ENCODE measurements at regions of chr22 and their contacts with region 1.

Region 1: GRCh38 chr22:30606455-30607299 is at the start of gene TCN2:
- DNase-seq: peak in 1 of 2 experiments; percentile 53
- H3K4me3 ChIP-seq: peak within 1 kb of the TSS; percentile 46; the same call in 1 of the 2 replicates
- H3K27ac ChIP-seq: no peak within 1 kb of the TSS
- H3K4me1 ChIP-seq: peaks cover 34% of the 10 kb centered on the region
- H3K27me3 ChIP-seq: no peaks in the 10 kb centered on the region
- CTCF ChIP-seq: no peak
- total RNA-seq, gene TCN2: 11.5 and 12.9 TPM in 2 replicates

Region 2: GRCh38 chr22:30262917-30263741 is 343.5 kb before region 1 on chr22:
- CTCF ChIA-PET with region 1: no interaction called
- POLR2A ChIA-PET with region 1: no interaction called
- intact Hi-C with region 1: loop called (anchors 10 kb)
- DNase-seq: peak in 1 of 2 experiments; percentile 64
- H3K4me3 ChIP-seq: peak overlapping the region; percentile 49; the same call in 1 of the 2 replicates
- H3K27ac ChIP-seq: no peak overlapping the region
- H3K4me1 ChIP-seq: peaks cover 51% of the 10 kb centered on the region
- H3K27me3 ChIP-seq: no peaks in the 10 kb centered on the region
- CTCF ChIP-seq: peak; percentile 100

Region 3: GRCh38 chr22:30386960-30387827 is 219.5 kb before region 1 on chr22 and contains the start of gene RNF215:
- CTCF ChIA-PET with region 1: interaction called, 3 read pairs
- POLR2A ChIA-PET with region 1: no interaction called
- intact Hi-C with region 1: loop called (anchors 1 kb)
- DNase-seq: peak; percentile 52 to 89
- H3K4me3 ChIP-seq: peak within 1 kb of the TSS; percentile 65
- H3K27ac ChIP-seq: no peak within 1 kb of the TSS
- H3K4me1 ChIP-seq: peaks cover 15% of the 10 kb centered on the region
- H3K27me3 ChIP-seq: no peaks in the 10 kb centered on the region
- CTCF ChIP-seq: peak; percentile 94
- total RNA-seq, gene RNF215: 24.0 and 33.8 TPM in 2 replicates

Region 4: GRCh38 chr22:30423982-30424963 is 182.4 kb before region 1 on chr22:
- CTCF ChIA-PET with region 1: no interaction called
- POLR2A ChIA-PET with region 1: interaction called, 6 read pairs
- intact Hi-C with region 1: loop called (anchors 10 kb)
- DNase-seq: peak; percentile 98 to 99
- H3K4me3 ChIP-seq: peak overlapping the region; percentile 70
- H3K27ac ChIP-seq: peak overlapping the region; percentile 93
- H3K4me1 ChIP-seq: peaks cover 43% of the 10 kb centered on the region
- H3K27me3 ChIP-seq: no peaks in the 10 kb centered on the region
- CTCF ChIP-seq: peak; percentile 19; the same call in 1 of the 2 replicates

Region 5: GRCh38 chr22:30562366-30562765 is 44.3 kb before region 1 on chr22:
- CTCF ChIA-PET with region 1: interaction called, 10 read pairs
- POLR2A ChIA-PET with region 1: no interaction called
- intact Hi-C with region 1: no loop called
- DNase-seq: peak; percentile 89 to 97
- H3K4me3 ChIP-seq: no peak overlapping the region
- H3K27ac ChIP-seq: peak overlapping the region; percentile 7; the same call in 1 of the 2 replicates
- H3K4me1 ChIP-seq: peaks cover 20% of the 10 kb centered on the region
- H3K27me3 ChIP-seq: no peaks in the 10 kb centered on the region
- CTCF ChIP-seq: no peak

Region 6: DNA sequence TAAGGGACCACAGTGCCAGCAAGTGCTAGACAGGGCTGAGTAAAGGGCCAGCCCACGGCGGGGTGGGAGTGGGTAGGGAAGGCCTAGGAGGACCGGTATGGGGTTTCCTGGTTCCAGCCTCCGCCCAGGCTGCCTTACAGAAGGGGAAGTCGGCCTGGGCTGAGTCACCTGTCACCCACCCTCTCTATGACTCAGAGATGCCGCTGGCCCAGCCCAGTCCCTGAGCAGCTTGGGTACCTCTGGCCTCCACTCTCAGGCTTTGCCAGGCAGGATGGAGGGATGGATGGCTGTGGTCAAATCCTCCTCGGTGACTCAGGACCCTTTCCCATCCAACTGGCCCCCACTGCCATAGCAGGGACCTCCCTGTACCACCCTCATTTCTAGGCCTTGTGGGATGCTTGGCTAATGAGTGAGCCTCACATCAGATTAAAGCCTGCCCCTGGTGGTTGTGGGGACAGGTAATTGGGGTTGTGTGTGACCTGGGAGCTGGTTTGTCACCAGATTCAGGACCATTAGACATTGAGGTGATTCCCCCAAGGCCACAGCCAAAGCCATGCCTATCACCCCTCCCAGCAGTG is 42.8 kb after region 1 on chr22:
- CTCF ChIA-PET with region 1: no interaction called
- POLR2A ChIA-PET with region 1: no interaction called
- intact Hi-C with region 1: no loop called
- DNase-seq: peak; percentile 86 to 90
- H3K4me3 ChIP-seq: no peak overlapping the region
- H3K27ac ChIP-seq: peak overlapping the region; percentile 30; the same call in 1 of the 2 replicates
- H3K4me1 ChIP-seq: peaks cover 15% of the 10 kb centered on the region
- H3K27me3 ChIP-seq: no peaks in the 10 kb centered on the region
- CTCF ChIP-seq: no peak; the same call in 1 of the 2 replicates

Region 7: GRCh38 chr22:30694171-30694639 is 87.5 kb after region 1 on chr22:
- CTCF ChIA-PET with region 1: no interaction called
- POLR2A ChIA-PET with region 1: interaction called, 22 read pairs
- intact Hi-C with region 1: no loop called
- DNase-seq: peak; percentile 59 to 70
- H3K4me3 ChIP-seq: peak overlapping the region; percentile 64
- H3K27ac ChIP-seq: no peak overlapping the region
- H3K4me1 ChIP-seq: peaks cover 9% of the 10 kb centered on the region; the same call in 1 of the 2 replicates
- H3K27me3 ChIP-seq: no peaks in the 10 kb centered on the region
- CTCF ChIP-seq: no peak